ENCODE measurements at regions of chr5 and their contacts with region 1.

Region 1: DNA sequence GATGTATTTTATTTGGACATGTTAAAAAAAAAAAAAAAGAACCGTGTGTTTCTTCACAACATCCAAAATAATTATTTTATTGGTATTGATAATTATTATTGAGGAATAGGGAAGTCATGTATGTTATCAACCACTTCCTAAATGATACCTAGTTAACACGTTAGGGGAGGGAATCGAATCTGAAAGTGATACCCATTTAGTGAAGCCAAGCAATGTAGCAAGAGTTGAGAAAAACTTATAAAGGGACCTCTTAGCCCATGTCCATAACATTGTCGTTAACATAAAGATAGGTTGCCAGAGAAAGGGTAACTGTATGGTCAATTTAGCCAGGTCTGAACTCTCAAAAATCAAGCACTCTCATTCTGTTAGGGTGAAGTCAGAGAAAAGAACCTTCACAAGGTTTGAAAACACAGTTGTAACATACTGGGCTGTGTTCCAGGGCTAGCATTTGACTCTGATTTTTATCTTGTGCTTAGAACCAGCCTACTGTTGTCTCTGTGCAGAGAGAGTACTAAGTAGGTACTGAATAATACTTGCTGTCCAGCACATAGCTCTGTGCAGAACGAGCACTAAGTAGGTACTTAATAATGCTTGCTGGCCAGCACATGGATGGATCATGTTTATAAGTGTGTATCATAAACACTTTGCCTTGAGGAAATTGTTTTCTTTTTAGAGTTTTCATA is 60.4 kb downstream of the GHR start:
- DNase-seq: no peak
- H3K4me3 Mint-ChIP-seq: no peak overlapping the region
- H3K27ac Mint-ChIP-seq: no peak overlapping the region
- H3K4me1 Mint-ChIP-seq: no peaks in the 10 kb centered on the region
- H3K27me3 Mint-ChIP-seq: no peaks in the 10 kb centered on the region
- CTCF ChIP-seq: no peak

Region 2: DNA sequence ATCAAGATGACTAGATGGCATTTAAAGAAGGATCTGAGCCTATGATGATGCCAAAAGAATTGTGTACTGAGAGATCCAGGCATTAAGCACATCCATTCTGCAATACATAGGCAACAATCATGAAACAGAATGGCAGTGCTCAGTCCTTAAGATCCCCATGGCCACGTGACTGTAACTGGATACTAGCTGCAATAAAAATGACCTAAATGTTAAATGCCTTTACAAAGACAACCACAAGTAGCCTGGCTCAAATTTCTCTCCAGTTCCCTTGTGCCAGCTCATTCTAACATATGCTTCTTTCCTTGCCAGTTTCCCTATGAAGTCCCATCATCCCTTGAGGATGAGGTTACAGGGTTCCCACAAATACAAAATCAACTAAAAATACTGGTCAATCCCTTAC is 208.7 kb before region 1 on chr5:
- CTCF ChIA-PET with region 1: no interaction called
- POLR2A ChIA-PET with region 1: no interaction called
- intact Hi-C with region 1: no loop called
- DNase-seq: peak; percentile 55
- H3K4me3 Mint-ChIP-seq: no peak overlapping the region
- H3K27ac Mint-ChIP-seq: no peak overlapping the region
- H3K4me1 Mint-ChIP-seq: no peaks in the 10 kb centered on the region
- H3K27me3 Mint-ChIP-seq: no peaks in the 10 kb centered on the region
- CTCF ChIP-seq: no peak

Region 3: GRCh38 chr5:42495914-42496313 is 12.3 kb after region 1 on chr5:
- CTCF ChIA-PET with region 1: interaction called, 4 read pairs
- POLR2A ChIA-PET with region 1: interaction called, 16 read pairs
- intact Hi-C with region 1: no loop called
- DNase-seq: peak; percentile 85
- H3K4me3 Mint-ChIP-seq: no peak overlapping the region
- H3K27ac Mint-ChIP-seq: no peak overlapping the region
- H3K4me1 Mint-ChIP-seq: peaks cover 46% of the 10 kb centered on the region
- H3K27me3 Mint-ChIP-seq: no peaks in the 10 kb centered on the region
- CTCF ChIP-seq: no peak

Region 4: GRCh38 chr5:42858031-42858643 is 374.5 kb after region 1 on chr5:
- CTCF ChIA-PET with region 1: no interaction called
- POLR2A ChIA-PET with region 1: no interaction called
- intact Hi-C with region 1: no loop called
- DNase-seq: peak; percentile 24
- H3K4me3 Mint-ChIP-seq: peak overlapping the region; percentile 21
- H3K27ac Mint-ChIP-seq: peak overlapping the region; percentile 89
- H3K4me1 Mint-ChIP-seq: peaks cover 13% of the 10 kb centered on the region
- H3K27me3 Mint-ChIP-seq: no peaks in the 10 kb centered on the region
- CTCF ChIP-seq: no peak

Measured in MCF 10A (cell line).